AG04450 (cell line): ENCODE measurements at regions of chr14 and their contacts with region 1.

Region 1: GRCh38 chr14:69107407-69108003 is 45.4 kb downstream of the DCAF5 start:
- DNase-seq: peak; percentile 51
- H3K4me3 ChIP-seq: no peak overlapping the region
- H3K27ac ChIP-seq: no peak overlapping the region
- H3K27me3 ChIP-seq: no peaks in the 10 kb centered on the region
- CTCF ChIP-seq: peak; percentile 73

Region 2: DNA sequence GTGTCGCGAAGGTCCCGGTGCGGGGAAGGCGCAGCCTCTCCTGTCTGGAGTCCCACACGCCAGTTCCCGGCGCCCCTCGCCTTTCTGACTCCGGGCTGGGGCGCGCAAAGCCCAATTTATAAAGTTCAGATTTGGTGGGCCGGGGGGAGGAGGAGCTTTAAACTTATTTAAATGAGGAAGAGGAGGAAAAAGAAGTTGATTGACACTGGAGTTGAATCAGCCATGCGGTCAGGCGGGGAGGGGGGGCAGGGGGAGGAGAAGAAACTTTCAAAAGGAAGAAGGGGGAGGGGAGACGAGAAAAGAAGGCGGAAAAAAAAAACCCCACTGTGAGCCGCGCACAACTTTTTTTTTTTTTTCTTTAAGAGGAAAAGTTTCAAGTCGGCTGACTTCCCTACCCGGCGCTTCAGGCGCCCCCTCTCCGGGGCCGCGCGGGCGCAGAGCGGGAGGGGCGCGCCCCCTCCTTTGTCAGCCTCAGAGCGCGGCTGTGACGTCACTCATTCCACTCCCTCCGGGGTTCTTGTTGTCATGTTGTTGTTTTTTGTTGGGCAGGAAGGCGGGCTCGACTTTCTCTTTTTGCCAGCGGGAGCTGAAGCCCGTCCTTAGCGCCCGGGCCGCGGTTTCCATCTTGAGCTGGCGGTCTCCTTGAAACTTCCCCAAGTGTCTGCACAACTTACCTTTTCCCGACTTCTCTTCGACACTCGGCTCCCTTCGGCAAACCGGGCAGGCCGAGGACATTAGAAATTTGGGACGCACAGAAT is 314.4 kb before region 1 on chr14 and contains the start of gene ZFP36L1:
- CTCF ChIA-PET with region 1: no interaction called
- POLR2A ChIA-PET with region 1: no interaction called
- DNase-seq: peak; percentile 92
- H3K4me3 ChIP-seq: peak within 1 kb of the TSS; percentile 100
- H3K27ac ChIP-seq: peak within 1 kb of the TSS; percentile 100
- H3K27me3 ChIP-seq: no peaks in the 10 kb centered on the region
- CTCF ChIP-seq: no peak
- polyA plus RNA-seq, gene ZFP36L1: 54.4 and 61.5 TPM in 2 replicates

Region 3: GRCh38 chr14:68926236-68926635 is 181.3 kb before region 1 on chr14:
- CTCF ChIA-PET with region 1: interaction called, 19 read pairs
- POLR2A ChIA-PET with region 1: no interaction called
- DNase-seq: no peak
- H3K4me3 ChIP-seq: no peak overlapping the region
- H3K27ac ChIP-seq: no peak overlapping the region
- H3K27me3 ChIP-seq: no peaks in the 10 kb centered on the region
- CTCF ChIP-seq: peak; percentile 55

Region 4: GRCh38 chr14:69034612-69035262 is 72.8 kb before region 1 on chr14:
- CTCF ChIA-PET with region 1: no interaction called
- POLR2A ChIA-PET with region 1: no interaction called
- DNase-seq: no peak
- H3K4me3 ChIP-seq: no peak overlapping the region
- H3K27ac ChIP-seq: peak overlapping the region; percentile 49
- H3K27me3 ChIP-seq: no peaks in the 10 kb centered on the region
- CTCF ChIP-seq: 0 out of 2 replicates have a peak, but pooled peaks have one; percentile 13

Region 5: DNA sequence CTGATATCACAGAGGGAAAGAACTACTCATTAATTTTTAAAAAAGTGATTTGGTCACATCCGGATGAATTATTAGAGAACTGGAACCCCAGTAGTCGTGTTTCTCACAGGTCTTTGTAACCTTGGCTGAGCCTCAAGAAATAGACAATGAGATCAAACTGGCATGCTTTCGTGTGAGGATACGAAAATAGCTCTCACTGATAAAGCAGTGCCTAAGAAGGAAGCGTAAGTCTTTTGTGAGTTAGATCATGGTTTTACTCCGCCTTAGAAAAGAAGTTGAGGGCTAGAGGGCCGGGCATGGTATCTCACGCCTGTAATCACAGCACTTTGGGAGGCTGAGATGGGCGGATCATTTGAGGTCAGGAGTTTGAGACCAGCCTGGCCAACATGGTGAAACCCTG is 118.7 kb after region 1 on chr14:
- CTCF ChIA-PET with region 1: no interaction called
- POLR2A ChIA-PET with region 1: no interaction called
- DNase-seq: no peak
- H3K4me3 ChIP-seq: no peak overlapping the region
- H3K27ac ChIP-seq: no peak overlapping the region
- H3K27me3 ChIP-seq: no peaks in the 10 kb centered on the region
- CTCF ChIP-seq: no peak